ENCODE measurements at regions of chr20 and their contacts with region 1.

Region 1: DNA sequence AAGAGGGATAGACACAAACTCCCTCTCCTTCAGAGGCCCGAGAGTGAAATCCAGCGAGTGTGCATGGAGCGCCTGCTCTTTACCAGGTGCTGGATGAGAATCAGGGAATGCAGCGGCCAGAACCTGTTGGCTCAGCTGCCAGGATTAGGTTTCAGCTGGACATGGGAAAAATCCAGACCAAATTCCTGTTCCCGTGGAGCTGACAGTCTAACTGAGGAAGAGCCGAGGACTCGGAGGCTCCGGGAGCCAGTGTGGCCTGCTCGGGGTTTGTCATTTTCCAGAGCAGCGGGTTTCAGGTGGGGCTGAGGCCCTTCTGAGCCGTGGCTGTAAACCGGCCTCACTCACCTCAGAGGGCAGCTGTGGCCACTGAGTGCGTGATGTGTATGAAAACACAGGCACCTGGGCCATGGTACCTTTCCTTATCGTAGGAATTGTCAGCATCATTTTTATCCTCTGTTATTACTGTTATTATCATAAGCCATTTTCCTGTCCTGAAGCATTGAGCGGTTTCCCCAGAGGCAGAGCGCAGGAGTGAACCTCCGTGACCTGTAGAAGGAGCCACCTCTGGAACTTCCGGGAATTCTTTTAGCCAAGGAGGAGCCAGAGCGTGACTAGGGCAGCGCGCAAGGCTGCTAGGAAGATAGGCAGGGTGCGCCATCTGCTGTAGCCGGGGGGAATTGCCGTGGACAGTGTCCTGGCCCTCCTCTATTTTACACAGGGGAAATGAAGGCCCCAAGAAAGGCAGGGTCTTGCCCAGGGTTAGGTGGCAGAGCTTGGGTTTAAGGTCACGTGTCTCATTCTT is 27.3 kb downstream of the PKIG start:
- DNase-seq: peak; percentile 86
- ATAC-seq: peak; percentile 98
- H3K4me3 Mint-ChIP-seq: no peak overlapping the region
- H3K27ac Mint-ChIP-seq: peak overlapping the region; percentile 70
- H3K4me1 Mint-ChIP-seq: peaks cover 10% of the 10 kb centered on the region
- H3K27me3 Mint-ChIP-seq: no peaks in the 10 kb centered on the region

Region 2: GRCh38 chr20:44388466-44389023 is 221.2 kb before region 1 on chr20:
- CTCF ChIA-PET with region 1: interaction called, 36 read pairs
- DNase-seq: peak; percentile 82
- ATAC-seq: peak; percentile 92
- H3K4me3 Mint-ChIP-seq: no peak overlapping the region
- H3K27ac Mint-ChIP-seq: no peak overlapping the region
- H3K4me1 Mint-ChIP-seq: peaks cover 3% of the 10 kb centered on the region
- H3K27me3 Mint-ChIP-seq: peaks cover 16% of the 10 kb centered on the region

Region 3: GRCh38 chr20:44521484-44522481 is 87.9 kb before region 1 on chr20 and contains the start of gene SERINC3:
- CTCF ChIA-PET with region 1: interaction called, 11 read pairs
- DNase-seq: peak; percentile 98
- ATAC-seq: peak; percentile 99
- H3K4me3 Mint-ChIP-seq: peak within 1 kb of the TSS; percentile 81
- H3K27ac Mint-ChIP-seq: peak within 1 kb of the TSS; percentile 93
- H3K4me1 Mint-ChIP-seq: peaks cover 39% of the 10 kb centered on the region
- H3K27me3 Mint-ChIP-seq: no peaks in the 10 kb centered on the region
- total RNA-seq, gene SERINC3: 50.1 to 64.6 TPM

Region 4: GRCh38 chr20:44598423-44599305 is 11.0 kb before region 1 on chr20:
- CTCF ChIA-PET with region 1: interaction called, 12 read pairs
- DNase-seq: no peak
- ATAC-seq: peak; percentile 76
- H3K4me3 Mint-ChIP-seq: peak overlapping the region; percentile 44
- H3K27ac Mint-ChIP-seq: peak overlapping the region; percentile 58
- H3K4me1 Mint-ChIP-seq: peaks cover 11% of the 10 kb centered on the region
- H3K27me3 Mint-ChIP-seq: no peaks in the 10 kb centered on the region

Region 5: DNA sequence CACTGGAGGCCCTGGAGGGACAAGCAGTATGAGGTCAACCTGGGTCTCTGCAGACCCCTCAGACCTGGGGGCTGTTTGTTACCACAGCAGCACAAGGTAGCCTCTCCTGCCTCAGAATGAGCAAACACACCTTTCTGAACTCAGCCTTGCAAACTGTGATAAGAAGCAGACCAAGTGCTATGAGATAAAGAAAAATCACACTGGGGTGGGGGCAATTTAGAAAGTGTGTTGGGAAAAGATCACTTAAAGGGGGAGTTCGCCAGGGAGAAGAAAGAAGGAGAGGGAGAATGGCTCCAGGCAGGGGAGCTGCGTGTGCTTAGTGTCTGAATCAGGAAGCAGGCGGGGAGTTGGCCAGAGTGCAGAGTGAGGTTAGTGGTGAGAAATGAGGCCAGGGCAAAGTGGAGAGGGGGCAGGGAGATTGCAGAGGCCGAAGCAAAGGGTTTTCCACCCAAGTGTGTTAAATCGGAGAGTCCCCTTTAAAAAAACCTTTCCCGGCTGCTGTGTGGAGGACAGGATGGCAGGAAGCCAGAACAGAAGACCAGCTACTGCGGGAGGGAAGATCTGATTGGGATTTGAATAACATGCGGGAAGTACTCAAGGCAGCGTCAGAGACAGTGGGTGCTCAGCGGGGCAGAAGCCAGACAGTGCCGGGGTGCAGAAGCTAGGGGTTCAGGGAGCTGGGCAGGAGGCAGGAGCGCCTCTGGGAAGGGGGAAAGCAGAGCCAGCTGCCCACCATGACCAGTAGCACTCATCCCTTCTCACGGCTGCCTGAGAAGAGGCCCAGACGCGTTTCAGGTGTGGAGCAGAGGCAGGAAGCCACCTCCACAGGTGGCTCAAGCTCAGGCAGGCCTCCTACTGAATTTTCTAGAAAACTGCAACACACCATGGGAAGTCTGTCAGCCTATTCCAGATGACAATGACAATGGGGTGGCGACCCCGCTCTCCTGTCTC is 32.8 kb after region 1 on chr20:
- CTCF ChIA-PET with region 1: interaction called, 10 read pairs
- DNase-seq: peak; percentile 71
- ATAC-seq: peak; percentile 18
- H3K4me3 Mint-ChIP-seq: peak overlapping the region; percentile 61
- H3K27ac Mint-ChIP-seq: peak overlapping the region; percentile 98
- H3K4me1 Mint-ChIP-seq: peaks cover 72% of the 10 kb centered on the region
- H3K27me3 Mint-ChIP-seq: no peaks in the 10 kb centered on the region

Region 6: DNA sequence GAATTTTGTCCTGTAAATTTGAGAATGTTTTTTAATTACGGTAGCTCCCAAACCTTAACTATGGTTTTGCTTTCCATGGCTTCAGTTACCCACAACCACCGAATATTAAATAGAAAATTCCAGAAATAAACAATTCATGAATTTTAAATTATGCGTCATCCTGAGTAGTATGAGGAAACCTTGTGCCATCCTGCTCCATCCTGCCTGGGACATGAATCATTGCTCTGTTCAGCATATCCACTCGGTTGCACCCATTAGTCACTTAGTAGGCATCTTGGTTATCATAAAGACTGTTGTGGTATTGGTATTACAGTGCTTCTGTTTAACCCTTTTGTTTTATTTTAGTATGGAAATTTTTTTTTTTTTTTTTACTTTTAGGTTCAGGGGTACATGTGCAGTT is 451.5 kb after region 1 on chr20:
- CTCF ChIA-PET with region 1: no interaction called
- DNase-seq: no peak
- ATAC-seq: no peak
- H3K4me3 Mint-ChIP-seq: no peak overlapping the region
- H3K27ac Mint-ChIP-seq: no peak overlapping the region
- H3K4me1 Mint-ChIP-seq: peaks cover 57% of the 10 kb centered on the region
- H3K27me3 Mint-ChIP-seq: no peaks in the 10 kb centered on the region